Activated CD4-positive, alpha-beta T cell treated with anti-CD3 and anti-CD28 coated beads for 36 hours (primary cell): ENCODE measurements at regions of chr6 and their contacts with region 1.

Region 1: GRCh38 chr6:153032255-153032882 is 29.9 kb upstream of the MTRF1L start:
- DNase-seq: no peak
- ATAC-seq: no peak
- H3K4me3 Mint-ChIP-seq: no peak overlapping the region
- H3K27ac Mint-ChIP-seq: no peak overlapping the region
- H3K4me1 Mint-ChIP-seq: no peaks in the 10 kb centered on the region
- H3K27me3 Mint-ChIP-seq: peaks cover 15% of the 10 kb centered on the region

Region 2: DNA sequence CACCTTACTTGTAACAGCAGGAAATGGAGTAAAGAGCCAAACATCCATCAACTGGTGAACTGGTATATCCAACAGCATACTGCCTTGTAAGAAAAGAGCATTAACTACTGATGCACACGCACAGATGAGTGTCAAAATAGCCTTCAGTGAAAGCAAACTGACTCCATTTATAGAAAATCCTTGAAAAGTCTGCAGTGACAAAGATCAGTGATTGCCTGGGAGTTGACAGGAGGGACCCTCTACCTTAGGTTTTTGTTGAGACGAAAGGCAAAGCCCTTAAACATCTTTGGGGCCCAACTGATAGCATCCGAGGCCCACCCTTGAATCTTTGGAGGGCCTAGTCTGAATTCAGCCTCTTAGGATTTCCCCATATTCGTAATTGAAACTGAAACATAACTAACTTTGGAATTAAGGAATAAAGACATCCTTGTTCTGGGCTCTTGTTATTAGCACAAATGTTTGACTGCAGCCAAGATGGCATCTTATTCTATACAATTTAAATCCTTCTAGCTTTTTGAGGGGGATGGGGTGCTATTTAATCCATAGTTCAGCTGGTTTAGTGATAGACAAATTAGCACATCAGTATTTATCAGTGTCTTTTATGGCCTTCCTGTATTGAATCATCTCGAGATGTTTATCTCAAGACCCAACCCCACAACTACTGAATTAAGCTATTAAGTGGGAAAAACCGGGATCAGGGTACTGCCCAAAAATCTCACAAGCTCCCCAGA is 62.5 kb before region 1 on chr6:
- CTCF ChIA-PET with region 1: no interaction called
- POLR2A ChIA-PET with region 1: no interaction called
- intact Hi-C with region 1: no loop called
- DNase-seq: no peak
- ATAC-seq: no peak
- H3K4me3 Mint-ChIP-seq: no peak overlapping the region
- H3K27ac Mint-ChIP-seq: no peak overlapping the region
- H3K4me1 Mint-ChIP-seq: peaks cover 12% of the 10 kb centered on the region
- H3K27me3 Mint-ChIP-seq: no peaks in the 10 kb centered on the region

Region 3: GRCh38 chr6:153312641-153313040 is 280.3 kb after region 1 on chr6:
- CTCF ChIA-PET with region 1: interaction called, 5 read pairs
- POLR2A ChIA-PET with region 1: no interaction called
- intact Hi-C with region 1: loop called (anchors 1 to 5 kb)
- DNase-seq: peak; percentile 65
- ATAC-seq: peak; percentile 51
- H3K4me3 Mint-ChIP-seq: no peak overlapping the region
- H3K27ac Mint-ChIP-seq: no peak overlapping the region
- H3K4me1 Mint-ChIP-seq: no peaks in the 10 kb centered on the region
- H3K27me3 Mint-ChIP-seq: peaks cover 2% of the 10 kb centered on the region

Region 4: GRCh38 chr6:153328169-153328568 is 295.8 kb after region 1 on chr6:
- CTCF ChIA-PET with region 1: no interaction called
- POLR2A ChIA-PET with region 1: no interaction called
- intact Hi-C with region 1: no loop called
- DNase-seq: no peak
- ATAC-seq: no peak
- H3K4me3 Mint-ChIP-seq: no peak overlapping the region
- H3K27ac Mint-ChIP-seq: no peak overlapping the region
- H3K4me1 Mint-ChIP-seq: no peaks in the 10 kb centered on the region
- H3K27me3 Mint-ChIP-seq: no peaks in the 10 kb centered on the region

Region 5: GRCh38 chr6:153511896-153512496 is 479.6 kb after region 1 on chr6:
- CTCF ChIA-PET with region 1: no interaction called
- POLR2A ChIA-PET with region 1: no interaction called
- intact Hi-C with region 1: loop called in 1 of 2 experiments (anchors 5 kb)
- DNase-seq: peak; percentile 5
- ATAC-seq: no peak
- H3K4me3 Mint-ChIP-seq: no peak overlapping the region
- H3K27ac Mint-ChIP-seq: no peak overlapping the region
- H3K4me1 Mint-ChIP-seq: no peaks in the 10 kb centered on the region
- H3K27me3 Mint-ChIP-seq: no peaks in the 10 kb centered on the region